ENCODE measurements at regions of chr7 and their contacts with region 1.

Region 1: DNA sequence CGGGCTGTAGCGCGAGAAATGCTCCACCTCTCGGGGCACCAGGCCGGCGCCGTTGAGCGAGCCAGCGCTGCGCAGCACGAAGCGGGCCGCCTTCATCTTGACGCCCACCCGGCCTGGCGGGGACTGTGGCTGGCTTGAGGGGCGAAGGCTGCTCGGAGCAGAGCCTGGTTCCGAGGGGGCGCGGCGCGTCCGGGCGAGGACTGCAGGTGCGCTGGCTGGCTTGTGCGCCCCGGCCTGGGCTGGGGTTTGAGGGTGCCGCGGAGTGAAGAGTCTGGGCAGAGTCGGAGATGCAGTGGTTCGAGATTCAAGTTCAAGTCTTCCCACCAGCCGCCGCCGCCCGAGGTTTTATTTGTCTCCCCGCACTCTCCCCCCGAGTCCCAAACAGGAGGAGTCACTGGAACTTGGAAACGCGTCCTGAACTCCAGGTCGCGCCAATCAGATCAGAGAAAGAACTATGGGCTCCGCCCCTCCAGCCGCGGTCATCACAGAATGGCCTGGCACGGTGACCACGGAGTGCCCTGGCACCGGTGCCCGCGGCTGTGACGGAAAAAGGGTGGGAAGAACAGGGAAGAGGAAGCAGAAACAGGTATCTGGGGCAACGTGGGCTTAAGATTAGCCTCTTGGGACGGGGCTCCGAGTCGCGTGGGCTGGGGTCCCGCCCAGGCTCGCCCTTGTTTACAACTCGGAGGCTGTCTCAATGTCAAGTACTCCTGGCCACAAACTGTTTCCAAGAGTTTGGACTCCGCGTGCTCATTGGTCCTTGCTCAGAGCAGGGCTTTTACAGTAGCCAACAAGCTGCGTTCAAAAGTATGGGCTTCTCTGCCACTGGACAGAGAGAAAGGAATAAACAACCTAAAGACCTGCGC is at the start of gene PDK4:
- DNase-seq: peak; percentile 87 to 96 (median 90)
- H3K4me3 ChIP-seq: peak within 1 kb of the TSS; percentile 74
- H3K27ac ChIP-seq: peak within 1 kb of the TSS; percentile 91 to 95
- H3K4me1 ChIP-seq: peaks cover 6% of the 10 kb centered on the region
- H3K27me3 ChIP-seq: no peaks in the 10 kb centered on the region
- CTCF ChIP-seq: peak in 2 of 3 donors; percentile 5 to 24
- EP300 ChIP-seq: peak; percentile 86
- POLR2A ChIP-seq: peak; percentile 79
- total RNA-seq, gene PDK4: 45.9 to 718 (median 185) TPM

Region 2: DNA sequence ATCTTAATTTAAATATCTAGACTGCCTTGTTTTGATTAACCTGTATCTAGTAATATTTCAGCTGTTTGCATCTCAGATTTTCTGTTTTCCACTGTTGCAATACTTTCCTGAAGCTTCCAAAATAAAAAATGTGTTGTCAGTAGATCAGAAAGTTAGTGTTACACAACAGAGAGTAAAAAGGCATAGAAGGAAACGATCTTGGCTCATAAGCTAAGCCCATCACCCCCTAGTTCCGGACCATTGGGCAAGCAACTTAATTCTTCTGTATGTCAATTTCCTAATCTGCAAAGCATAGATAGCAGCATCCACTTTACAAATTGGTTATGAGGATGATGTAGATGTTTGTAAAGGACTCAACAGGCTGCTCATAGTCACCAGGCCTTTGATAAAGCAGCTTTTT is 204.7 kb before region 1 on chr7:
- intact Hi-C with region 1: no loop called
- DNase-seq: no peak
- H3K4me3 ChIP-seq: no peak overlapping the region
- H3K27ac ChIP-seq: no peak overlapping the region
- H3K4me1 ChIP-seq: no peaks in the 10 kb centered on the region
- H3K27me3 ChIP-seq: no peaks in the 10 kb centered on the region
- CTCF ChIP-seq: no peak
- EP300 ChIP-seq: no peak
- POLR2A ChIP-seq: no peak

Region 3: DNA sequence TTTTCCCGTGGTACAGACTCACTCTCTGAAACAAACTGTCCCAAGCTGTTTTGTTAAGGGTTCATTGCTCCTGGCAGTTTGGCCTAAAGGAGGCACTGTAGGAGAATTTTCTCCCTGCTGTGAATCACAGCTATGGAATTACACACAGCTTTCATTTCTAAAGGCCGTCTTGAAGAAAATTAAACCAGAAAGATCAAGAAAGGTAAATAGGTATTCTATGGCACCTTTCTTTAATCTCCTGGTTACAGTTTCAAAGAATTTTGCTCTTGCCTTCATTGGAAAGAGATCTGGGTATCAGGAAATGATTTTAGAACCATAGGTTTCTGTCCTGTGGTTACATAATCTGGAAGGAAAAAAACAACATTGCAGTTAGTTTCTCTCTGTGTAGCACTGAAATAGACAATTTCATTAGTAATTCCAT is 51.3 kb before region 1 on chr7:
- intact Hi-C with region 1: loop called in 3 of 4 experiments (anchors 5 kb)
- DNase-seq: peak in 4 of 5 donors; percentile 41 to 76 (median 46)
- H3K4me3 ChIP-seq: peak overlapping the region; percentile 29
- H3K27ac ChIP-seq: peak overlapping the region in 1 of 2 donors; percentile 72
- H3K4me1 ChIP-seq: peaks cover 11% of the 10 kb centered on the region
- H3K27me3 ChIP-seq: no peaks in the 10 kb centered on the region
- CTCF ChIP-seq: peak; percentile 57 to 83 (median 81)
- EP300 ChIP-seq: no peak
- POLR2A ChIP-seq: no peak

Region 4: DNA sequence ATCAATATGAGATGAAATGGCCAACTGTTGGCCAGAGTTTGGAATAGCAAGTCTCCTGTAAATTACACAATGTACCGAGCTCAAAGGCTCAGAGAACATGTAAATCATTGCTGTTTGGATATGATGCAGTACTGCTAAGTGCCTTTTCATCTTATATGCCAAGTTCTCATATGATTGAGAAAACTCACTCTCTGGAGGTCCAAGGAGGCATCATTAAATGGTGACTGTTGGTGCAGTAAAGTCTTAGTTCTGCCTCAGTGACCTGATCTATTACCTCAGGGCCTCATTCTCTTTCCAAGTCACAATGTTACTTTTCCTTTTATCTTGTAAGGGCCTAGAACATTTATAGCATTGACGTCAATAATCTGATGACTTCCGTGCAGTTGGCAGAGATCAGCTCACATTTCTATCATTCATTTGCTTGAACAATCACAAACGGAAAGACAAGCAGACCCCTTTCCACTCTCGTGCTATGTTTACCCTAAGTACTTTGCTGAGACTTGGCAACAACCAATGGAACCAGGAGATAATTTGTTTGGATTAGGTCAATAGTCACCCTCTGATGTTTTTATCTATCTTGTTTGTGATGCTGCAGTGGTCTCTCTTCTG is 32.5 kb after region 1 on chr7:
- intact Hi-C with region 1: no loop called
- DNase-seq: no peak
- H3K4me3 ChIP-seq: no peak overlapping the region
- H3K27ac ChIP-seq: no peak overlapping the region
- H3K4me1 ChIP-seq: peaks cover 2% of the 10 kb centered on the region
- H3K27me3 ChIP-seq: no peaks in the 10 kb centered on the region
- CTCF ChIP-seq: no peak
- EP300 ChIP-seq: peak; percentile 71
- POLR2A ChIP-seq: no peak

Measured in ovary (tissue), 10 donors.